Sciatic nerve (tissue), 2 donors: ENCODE measurements at regions of chr7 and their contacts with region 1.

Region 1: DNA sequence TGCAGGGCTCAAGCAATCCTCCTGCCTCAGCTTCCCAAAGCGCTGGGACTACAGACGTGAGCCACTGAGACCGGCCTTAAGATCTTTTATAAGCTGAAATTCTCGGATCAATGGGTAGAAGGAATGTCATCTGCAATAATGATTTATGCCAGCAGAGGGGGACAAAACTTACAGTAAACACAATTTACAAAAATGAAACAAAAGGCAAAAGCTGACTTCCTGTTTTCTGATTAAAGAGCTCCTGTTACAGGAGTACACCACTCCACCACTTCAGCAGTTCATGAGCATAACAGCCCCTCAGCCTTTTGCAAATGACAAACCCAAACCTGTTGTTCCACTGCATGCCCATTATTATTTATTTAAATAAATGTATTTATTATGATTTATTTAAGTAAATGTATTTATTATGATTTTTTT is 88.5 kb upstream of the ATP6V0A4 start:
- DNase-seq: no peak
- ATAC-seq: peak; percentile 36

Region 2: GRCh38 chr7:138785587-138786437 is 100.7 kb before region 1 on chr7:
- intact Hi-C with region 1: no loop called
- DNase-seq: no peak
- ATAC-seq: no peak

Region 3: DNA sequence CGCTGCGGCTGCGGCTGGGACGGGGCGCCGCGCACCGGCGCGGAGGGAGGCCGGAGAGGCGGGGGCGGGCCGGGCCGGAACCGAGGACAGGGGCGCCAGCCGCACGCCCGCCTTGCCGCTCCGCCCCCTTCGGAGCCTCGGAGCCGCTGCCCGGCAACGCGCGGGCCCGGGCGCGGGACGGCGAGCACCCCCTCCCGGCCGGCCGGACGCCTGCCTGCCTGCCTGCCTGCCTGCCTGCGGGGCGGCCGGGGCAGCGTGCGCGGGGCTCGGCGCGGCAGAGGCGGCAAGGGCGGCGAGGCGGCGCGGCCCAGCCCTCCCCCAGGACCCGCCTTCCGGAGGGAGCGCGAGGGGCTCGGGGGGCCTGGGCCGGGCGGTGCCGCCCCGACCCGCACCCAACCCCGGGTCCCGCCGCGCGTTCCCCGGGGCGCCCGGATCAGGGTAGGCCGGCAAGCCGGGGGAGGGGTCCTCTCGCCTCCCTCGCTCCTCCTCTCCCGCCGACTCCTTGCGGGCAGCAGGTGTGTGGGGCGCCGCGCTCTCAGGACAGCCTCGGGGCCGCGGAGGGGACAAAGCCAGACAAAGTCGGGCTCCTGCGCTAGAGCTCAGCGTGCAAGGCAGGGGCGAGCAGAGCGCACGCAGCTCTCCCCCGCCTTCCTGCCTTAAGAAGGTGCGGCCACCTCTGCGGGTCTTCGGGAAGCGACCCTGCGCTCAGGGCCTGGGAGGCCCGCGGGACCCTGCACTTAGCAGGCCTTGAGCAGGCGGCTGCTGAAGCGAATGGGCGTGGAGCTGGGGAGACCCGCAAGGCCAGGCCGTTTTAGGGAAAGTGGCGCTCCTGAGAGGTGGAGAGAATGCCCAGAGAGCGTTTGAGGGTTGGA is 95.1 kb after region 1 on chr7 and contains the start of gene KIAA1549:
- intact Hi-C with region 1: loop called (anchors 10 kb)
- DNase-seq: peak; percentile 75
- ATAC-seq: peak; percentile 93
- total RNA-seq, gene KIAA1549: 5.2 TPM